MCF 10A (cell line): ENCODE measurements at regions of chr9 and their contacts with region 1.

Region 1: GRCh38 chr9:108053555-108054061 is 564.0 kb upstream of the KLF4 start:
- DNase-seq: peak; percentile 94
- H3K4me3 Mint-ChIP-seq: peak overlapping the region; percentile 61
- H3K27ac Mint-ChIP-seq: peak overlapping the region; percentile 99
- H3K4me1 Mint-ChIP-seq: peaks cover 72% of the 10 kb centered on the region
- H3K27me3 Mint-ChIP-seq: no peaks in the 10 kb centered on the region
- CTCF ChIP-seq: no peak

Region 2: DNA sequence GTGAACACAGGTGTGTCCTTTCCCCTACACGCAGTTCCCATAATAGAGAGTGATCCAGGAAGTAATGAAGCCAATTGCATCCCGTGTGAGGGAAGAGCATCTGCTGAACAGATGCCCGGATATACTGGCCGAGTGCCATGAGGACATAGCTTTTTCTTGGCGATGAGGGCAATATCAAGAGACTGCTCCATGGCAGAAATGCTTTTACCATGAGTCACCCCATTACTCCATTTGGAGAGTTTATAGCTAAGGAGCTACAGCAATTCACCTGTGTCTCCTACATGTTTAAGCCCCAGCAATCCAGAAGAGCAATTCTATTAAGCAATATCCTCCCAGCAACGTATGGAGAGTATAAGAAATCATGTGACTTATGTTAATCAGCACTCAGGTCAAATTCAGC is 342.1 kb before region 1 on chr9:
- CTCF ChIA-PET with region 1: interaction called, 3 read pairs
- POLR2A ChIA-PET with region 1: interaction called, 12 read pairs
- intact Hi-C with region 1: loop called (anchors 1 kb)
- DNase-seq: peak; percentile 98
- H3K4me3 Mint-ChIP-seq: no peak overlapping the region
- H3K27ac Mint-ChIP-seq: peak overlapping the region; percentile 86
- H3K4me1 Mint-ChIP-seq: peaks cover 43% of the 10 kb centered on the region
- H3K27me3 Mint-ChIP-seq: no peaks in the 10 kb centered on the region
- CTCF ChIP-seq: no peak

Region 3: DNA sequence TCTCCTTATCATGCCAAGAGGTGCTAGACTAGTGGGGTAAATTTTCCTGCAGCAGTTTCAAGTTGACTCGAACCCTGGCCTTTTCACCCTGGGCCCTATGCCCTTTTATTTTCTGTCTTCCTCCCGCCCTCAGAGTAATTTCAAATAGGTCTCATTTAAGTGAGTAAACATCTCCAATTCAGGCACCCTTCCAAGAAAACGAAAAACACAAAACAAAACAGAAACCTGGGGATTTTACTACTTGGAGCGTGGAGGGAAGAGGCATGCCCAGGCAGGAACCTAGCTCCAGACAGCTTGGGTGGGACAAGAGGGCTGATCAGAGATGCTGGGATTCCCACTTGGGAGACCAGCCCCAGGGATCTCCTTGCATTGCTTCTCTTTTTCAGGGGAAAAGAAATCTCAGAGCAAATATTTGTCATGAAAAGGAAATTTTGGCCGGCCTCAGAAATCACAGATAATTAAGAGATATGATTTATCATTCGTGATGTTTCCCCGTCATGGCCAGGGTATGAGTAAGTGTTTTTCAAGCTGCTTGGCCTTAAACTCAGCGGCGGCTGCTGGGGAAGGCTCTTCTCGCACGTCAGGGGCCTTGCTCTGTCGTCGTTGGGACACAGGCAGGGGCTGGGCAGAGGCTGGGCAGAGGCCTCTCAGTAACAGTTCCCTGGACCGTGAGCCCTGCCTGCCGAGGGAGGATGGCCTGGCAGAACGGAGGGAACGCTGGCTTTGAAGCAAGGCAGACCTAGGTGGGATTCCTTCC is 315.4 kb before region 1 on chr9:
- CTCF ChIA-PET with region 1: interaction called, 6 read pairs
- POLR2A ChIA-PET with region 1: interaction called, 30 read pairs
- intact Hi-C with region 1: loop called (anchors 2 kb)
- DNase-seq: peak; percentile 95
- H3K4me3 Mint-ChIP-seq: peak overlapping the region; percentile 38
- H3K27ac Mint-ChIP-seq: peak overlapping the region; percentile 99
- H3K4me1 Mint-ChIP-seq: peaks cover 74% of the 10 kb centered on the region
- H3K27me3 Mint-ChIP-seq: no peaks in the 10 kb centered on the region
- CTCF ChIP-seq: no peak

Region 4: DNA sequence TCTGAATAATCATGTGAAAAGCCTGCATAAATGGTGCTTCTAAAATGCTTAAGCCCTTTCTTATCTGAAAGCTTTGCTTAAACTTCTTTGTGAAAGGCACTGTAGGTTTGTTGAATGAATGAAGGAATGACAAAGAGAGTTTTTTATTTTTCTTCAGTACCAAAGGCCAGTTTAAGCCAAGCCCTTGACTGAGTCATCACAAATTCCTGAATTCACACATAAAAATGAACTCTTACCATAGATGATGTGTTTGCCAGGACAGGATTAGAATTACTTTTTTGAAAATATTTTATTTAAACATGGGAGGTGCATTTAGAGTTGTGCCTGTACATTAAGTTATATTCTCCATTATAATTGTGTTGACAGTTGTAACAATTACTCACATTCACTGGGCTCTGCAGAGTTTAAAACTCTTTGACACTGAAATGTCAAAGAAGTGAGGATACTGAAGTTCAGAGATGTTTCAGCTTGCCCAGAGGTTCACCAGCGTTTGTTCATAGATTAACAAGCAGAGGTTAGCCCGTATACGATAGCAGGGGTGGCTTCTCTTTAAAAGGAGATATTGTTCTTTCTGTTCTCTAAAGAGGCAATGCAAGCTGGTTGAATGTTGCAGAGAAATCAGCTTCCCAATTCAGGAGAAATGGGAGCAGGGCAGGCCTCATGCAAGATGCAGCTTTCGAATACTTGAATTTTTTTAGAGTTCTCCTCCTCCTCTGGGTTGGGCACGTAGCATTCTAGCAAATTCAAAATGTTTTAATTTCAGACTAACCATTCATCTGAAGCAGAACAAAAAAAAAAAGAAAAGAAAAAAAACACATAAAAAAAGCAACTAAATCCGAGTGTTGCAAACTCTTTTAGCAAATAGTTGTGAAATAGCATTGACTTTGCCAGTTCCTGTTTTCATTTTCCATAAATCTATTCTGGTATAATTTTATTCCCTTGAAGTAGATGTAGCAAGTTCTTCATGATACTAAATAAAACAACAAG is 205.3 kb before region 1 on chr9:
- CTCF ChIA-PET with region 1: no interaction called
- POLR2A ChIA-PET with region 1: no interaction called
- intact Hi-C with region 1: loop called (anchors 5 kb)
- DNase-seq: peak; percentile 17
- H3K4me3 Mint-ChIP-seq: no peak overlapping the region
- H3K27ac Mint-ChIP-seq: no peak overlapping the region
- H3K4me1 Mint-ChIP-seq: peaks cover 11% of the 10 kb centered on the region
- H3K27me3 Mint-ChIP-seq: no peaks in the 10 kb centered on the region
- CTCF ChIP-seq: no peak

Region 5: DNA sequence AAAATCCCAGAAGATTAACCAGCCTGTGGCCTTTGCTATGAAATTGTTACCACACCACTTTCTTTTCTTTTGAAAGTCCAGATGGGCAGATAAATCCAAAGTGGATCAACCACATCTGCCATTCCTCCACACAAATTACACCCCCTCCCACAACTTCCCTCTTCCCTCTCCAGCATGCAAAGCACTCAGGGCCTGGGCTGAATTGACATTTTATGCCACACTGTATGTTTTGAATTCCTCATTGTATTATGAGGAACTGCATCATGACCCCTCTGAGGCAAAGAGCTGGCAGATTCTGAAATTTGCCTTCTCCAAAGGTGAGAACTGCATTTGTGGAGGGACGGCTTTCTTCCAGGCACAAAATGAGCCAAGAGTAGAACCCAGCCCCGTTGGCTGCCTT is 25.2 kb after region 1 on chr9:
- CTCF ChIA-PET with region 1: no interaction called
- POLR2A ChIA-PET with region 1: no interaction called
- intact Hi-C with region 1: no loop called
- DNase-seq: no peak
- H3K4me3 Mint-ChIP-seq: no peak overlapping the region
- H3K27ac Mint-ChIP-seq: no peak overlapping the region
- H3K4me1 Mint-ChIP-seq: no peaks in the 10 kb centered on the region
- H3K27me3 Mint-ChIP-seq: no peaks in the 10 kb centered on the region
- CTCF ChIP-seq: no peak

Region 6: DNA sequence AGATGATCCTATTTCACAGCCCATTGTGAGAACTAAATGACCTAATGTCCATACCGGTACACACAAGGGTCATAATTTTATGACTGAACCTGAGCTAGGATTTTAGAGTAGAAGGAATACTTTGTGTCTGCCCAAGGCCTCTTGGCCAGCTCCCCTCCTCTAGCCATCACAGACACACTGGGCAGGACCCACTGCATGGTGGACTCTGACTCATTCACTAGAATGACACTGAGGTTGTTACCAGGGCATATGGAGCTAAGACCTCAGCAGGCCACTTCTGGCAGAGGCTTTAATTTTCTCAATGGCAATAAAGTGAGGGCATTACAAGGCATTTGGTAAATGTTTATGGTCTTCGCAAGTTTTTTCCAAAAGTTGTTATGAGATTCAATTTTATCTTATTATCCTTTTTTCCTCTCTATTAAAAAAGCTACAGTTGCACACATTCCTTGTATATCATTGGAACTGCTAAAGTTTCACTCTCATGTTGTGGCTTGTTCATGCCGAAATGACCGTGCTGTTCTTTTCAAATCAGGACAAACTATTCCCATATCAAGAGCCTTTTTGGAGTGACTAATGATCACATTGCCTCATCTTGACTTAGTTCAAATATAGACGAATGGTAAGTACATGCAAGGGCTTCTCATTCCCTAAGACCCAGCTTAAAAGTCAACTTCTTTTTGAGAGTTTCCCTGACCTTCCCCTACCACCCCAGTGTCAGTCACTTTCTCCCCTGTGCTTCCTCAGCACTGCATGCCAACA is 206.5 kb after region 1 on chr9:
- CTCF ChIA-PET with region 1: interaction called, 5 read pairs
- POLR2A ChIA-PET with region 1: interaction called, 10 read pairs
- intact Hi-C with region 1: no loop called
- DNase-seq: peak; percentile 67
- H3K4me3 Mint-ChIP-seq: peak overlapping the region; percentile 17
- H3K27ac Mint-ChIP-seq: peak overlapping the region; percentile 93
- H3K4me1 Mint-ChIP-seq: peaks cover 20% of the 10 kb centered on the region
- H3K27me3 Mint-ChIP-seq: no peaks in the 10 kb centered on the region
- CTCF ChIP-seq: no peak

Region 7: DNA sequence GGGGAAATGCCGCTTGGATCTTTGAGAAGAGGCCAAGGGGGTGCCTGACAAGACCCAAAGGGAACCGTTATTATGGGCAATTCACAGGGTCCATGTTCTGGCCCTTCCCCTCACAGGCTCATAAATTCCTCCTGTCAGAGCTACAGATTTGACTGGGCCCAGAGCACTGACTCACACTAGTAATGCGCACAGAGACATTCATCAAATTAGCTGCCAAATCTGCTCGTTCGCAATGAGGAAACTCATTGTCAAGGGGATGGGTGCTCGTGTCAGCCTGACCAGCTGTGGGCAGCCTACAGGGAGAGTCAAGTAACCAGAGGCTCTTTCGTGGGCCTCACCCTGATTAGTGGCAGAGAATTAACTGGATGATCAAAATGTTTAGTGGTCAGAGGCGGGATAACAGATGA is 424.8 kb after region 1 on chr9:
- CTCF ChIA-PET with region 1: no interaction called
- POLR2A ChIA-PET with region 1: interaction called, 6 read pairs
- intact Hi-C with region 1: loop called (anchors 2 kb)
- DNase-seq: peak; percentile 97
- H3K4me3 Mint-ChIP-seq: peak overlapping the region; percentile 37
- H3K27ac Mint-ChIP-seq: peak overlapping the region; percentile 89
- H3K4me1 Mint-ChIP-seq: peaks cover 47% of the 10 kb centered on the region
- H3K27me3 Mint-ChIP-seq: no peaks in the 10 kb centered on the region
- CTCF ChIP-seq: no peak